ENCODE measurements at regions of chr11 and their contacts with region 1.

Region 1: DNA sequence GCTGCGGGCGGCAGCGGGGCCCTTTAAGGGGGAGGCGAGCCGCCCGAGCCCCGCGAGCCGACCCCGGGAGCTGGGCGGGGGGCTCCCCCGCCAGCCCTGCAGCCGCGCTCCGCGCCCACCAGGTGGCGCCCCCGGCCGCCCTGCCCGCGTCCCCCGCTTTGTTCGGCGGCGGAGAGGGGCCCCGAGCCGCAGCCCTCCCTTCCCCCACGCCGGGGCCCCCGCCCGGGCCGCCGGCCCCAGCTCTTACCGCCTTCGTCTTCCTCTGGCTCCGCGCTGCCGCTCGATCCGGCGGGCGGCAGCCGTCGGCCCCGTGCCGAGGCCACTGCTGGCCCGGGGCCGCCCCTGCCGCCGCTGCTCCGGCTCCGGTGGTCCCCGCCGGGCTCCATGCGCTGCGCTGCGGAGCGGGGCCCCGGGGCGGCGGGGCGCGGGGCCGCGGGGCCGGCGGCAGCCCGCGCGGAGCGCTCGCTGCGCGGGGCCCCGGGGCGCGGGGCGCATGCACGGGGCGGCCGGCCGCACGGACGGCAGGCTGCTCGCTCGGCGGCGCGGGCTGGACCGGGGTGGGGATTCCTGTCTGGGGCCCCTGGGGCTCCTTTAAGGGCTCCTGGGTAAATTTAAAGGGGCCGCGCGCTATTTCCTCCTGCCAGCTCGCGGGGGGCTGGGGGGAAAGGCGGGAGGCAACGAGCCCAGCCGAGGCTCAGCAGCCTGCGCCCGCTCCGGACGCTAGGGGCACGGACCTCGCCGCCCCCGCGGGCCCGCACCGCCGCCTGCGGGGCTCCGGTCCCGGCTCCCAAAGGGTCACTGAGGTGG is at the start of gene ZFTA:
- DNase-seq: no peak
- H3K4me3 ChIP-seq: peak within 1 kb of the TSS; percentile 68
- H3K27me3 ChIP-seq: no peaks in the 10 kb centered on the region
- CTCF ChIP-seq: 0 out of 2 replicates have a peak, but pooled peaks have one; percentile 11
- polyA plus RNA-seq, gene ZFTA: 4.7 and 5.8 TPM in 2 replicates

Region 2: DNA sequence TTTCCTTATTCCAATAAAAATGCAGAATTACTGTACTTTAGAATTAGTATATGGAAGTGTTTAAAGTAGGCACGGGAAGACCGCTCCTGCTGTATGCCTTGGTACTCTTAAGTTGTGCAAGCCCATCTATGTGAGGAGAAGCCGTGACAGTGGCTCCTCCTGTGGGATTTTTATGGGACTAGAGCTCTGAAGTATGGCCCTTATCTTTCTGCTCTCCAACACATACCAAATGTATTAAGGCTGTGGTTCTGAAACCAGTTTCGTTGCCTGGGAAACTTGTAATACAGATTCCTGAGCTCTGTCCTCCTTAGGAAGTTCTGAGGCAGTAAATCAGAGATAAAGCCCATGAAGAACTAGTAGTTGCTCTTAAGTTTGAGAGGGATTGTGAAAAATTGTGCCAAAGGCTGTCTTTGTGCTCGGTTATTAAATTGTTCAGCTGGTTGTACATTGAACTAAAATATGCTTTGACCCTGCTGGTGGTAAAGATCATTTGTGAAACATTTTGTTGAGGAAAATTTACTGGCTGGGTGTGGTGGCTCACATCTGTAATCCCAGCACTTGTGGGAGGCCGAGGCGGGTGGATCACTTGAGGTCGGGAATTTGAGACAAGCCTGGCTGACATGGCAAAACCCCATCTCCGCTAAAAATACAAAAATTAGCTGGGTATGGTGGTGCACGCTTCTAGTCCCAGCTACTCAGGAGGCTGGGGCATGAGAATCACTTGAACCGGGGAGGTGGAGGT is 57.8 kb before region 1 on chr11:
- CTCF ChIA-PET with region 1: no interaction called
- POLR2A ChIA-PET with region 1: no interaction called
- DNase-seq: peak; percentile 83
- H3K4me3 ChIP-seq: no peak overlapping the region
- H3K27me3 ChIP-seq: no peaks in the 10 kb centered on the region
- CTCF ChIP-seq: peak; percentile 45

Region 3: DNA sequence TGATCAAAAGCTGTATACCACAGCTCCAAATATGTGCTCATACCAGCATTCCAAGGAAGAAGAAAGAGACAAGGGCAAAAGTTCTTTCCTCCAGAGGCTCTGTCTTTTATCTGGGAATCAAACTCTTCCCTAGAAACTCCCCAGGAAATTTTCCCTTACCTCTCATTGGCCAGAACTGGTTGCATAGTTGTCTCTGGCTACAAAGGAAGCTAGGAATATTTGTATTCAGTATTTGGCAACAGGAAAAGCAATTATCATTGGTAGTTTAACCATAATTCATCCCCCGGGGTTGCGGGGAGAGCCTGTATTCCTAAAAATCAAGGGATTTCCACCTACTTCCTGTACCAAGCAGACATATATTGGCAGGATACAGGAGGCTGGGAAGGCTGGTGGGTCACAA is 10.6 kb after region 1 on chr11:
- CTCF ChIA-PET with region 1: interaction called, 13 read pairs
- POLR2A ChIA-PET with region 1: no interaction called
- DNase-seq: no peak
- H3K4me3 ChIP-seq: no peak overlapping the region
- H3K27me3 ChIP-seq: no peaks in the 10 kb centered on the region
- CTCF ChIP-seq: no peak